ENCODE measurements at regions of chr2 and their contacts with region 1.

Region 1: DNA sequence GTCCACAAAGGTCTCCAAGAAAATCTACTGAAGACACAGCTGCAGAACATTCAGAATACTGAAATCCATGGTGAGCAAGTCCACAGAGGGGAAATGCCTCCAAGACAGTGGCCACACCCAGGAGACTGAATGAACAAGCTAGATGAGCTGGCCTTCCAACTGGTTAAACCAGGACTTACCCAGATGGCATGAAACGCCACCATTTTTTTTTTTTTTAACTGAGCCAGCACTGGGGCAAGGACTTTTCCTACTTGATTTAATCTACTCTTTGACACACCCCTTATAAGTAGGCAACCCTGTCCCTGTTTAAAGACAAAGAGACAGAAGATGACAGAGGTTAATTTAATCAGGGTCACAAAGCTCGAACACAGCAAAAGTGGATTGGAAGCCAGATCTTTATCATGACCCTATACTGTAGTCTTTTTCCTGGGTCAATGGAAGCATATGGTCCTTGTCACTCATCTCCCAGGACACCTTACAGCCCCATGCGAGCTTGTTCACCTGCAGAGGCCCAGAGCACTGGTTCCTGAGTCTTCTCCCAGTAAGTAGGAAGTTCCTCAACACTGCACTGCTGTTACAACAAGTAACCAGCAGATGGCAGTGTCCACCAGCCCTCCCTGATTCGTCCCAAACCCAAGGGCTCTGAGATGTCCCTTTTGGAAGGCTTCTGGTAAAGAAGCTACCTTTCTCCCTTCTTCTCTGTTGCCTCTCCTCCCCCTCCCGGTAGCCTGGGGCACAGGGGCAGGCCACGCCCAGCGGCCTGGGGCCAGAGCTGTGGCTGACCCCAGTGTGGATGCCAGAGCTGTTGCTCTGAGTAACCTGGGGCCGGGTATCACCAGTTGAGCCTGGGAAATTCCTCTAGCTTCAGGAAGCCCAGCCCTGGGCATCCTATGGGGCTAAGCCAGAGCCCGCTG is 5.6 kb upstream of the GDF7 start:
- DNase-seq: peak; percentile 74
- ATAC-seq: peak; percentile 79
- H3K4me3 ChIP-seq: no peak overlapping the region
- H3K27ac ChIP-seq: no peak overlapping the region
- H3K4me1 ChIP-seq: peaks cover 8% of the 10 kb centered on the region
- H3K27me3 ChIP-seq: peaks cover 41% of the 10 kb centered on the region
- CTCF ChIP-seq: peak; percentile 95

Region 2: GRCh38 chr2:20429528-20429927 is 231.8 kb before region 1 on chr2:
- CTCF ChIA-PET with region 1: no interaction called
- POLR2A ChIA-PET with region 1: no interaction called
- in situ Hi-C with region 1: no loop called
- intact Hi-C with region 1: no loop called
- DNase-seq: no peak
- ATAC-seq: no peak
- H3K4me3 ChIP-seq: no peak overlapping the region
- H3K27ac ChIP-seq: no peak overlapping the region
- H3K4me1 ChIP-seq: peaks cover 3% of the 10 kb centered on the region; the same call in 1 of the 2 replicates
- H3K27me3 ChIP-seq: no peaks in the 10 kb centered on the region
- CTCF ChIP-seq: no peak

Region 3: GRCh38 chr2:20682167-20682920 is 21.0 kb after region 1 on chr2:
- CTCF ChIA-PET with region 1: no interaction called
- POLR2A ChIA-PET with region 1: no interaction called
- in situ Hi-C with region 1: no loop called
- intact Hi-C with region 1: no loop called
- DNase-seq: no peak
- ATAC-seq: no peak
- H3K4me3 ChIP-seq: no peak overlapping the region
- H3K27ac ChIP-seq: no peak overlapping the region
- H3K4me1 ChIP-seq: no peaks in the 10 kb centered on the region
- H3K27me3 ChIP-seq: no peaks in the 10 kb centered on the region
- CTCF ChIP-seq: peak; percentile 72

Region 4: DNA sequence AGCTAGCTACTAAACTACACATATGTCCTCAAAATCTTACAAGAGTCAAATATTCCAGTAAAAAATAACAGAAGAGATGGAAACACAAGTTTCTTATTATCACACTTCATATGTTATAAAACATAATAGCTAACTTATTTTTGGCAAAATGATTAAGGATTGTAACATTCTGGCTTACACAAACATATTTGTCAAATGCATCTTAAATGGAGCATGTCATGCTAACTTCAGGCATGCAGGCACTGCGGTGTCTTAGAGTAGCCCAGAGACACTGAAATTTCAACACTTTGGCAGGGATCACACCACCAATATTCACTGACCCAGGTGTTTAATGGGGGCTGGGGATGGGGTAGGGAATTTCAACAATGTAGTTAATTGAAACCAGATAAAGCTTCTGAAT is 110.0 kb after region 1 on chr2:
- CTCF ChIA-PET with region 1: no interaction called
- POLR2A ChIA-PET with region 1: no interaction called
- in situ Hi-C with region 1: no loop called
- intact Hi-C with region 1: loop called (anchors 10 kb)
- DNase-seq: no peak
- ATAC-seq: no peak
- H3K4me3 ChIP-seq: no peak overlapping the region
- H3K27ac ChIP-seq: no peak overlapping the region
- H3K4me1 ChIP-seq: no peaks in the 10 kb centered on the region
- H3K27me3 ChIP-seq: no peaks in the 10 kb centered on the region
- CTCF ChIP-seq: no peak

Region 5: DNA sequence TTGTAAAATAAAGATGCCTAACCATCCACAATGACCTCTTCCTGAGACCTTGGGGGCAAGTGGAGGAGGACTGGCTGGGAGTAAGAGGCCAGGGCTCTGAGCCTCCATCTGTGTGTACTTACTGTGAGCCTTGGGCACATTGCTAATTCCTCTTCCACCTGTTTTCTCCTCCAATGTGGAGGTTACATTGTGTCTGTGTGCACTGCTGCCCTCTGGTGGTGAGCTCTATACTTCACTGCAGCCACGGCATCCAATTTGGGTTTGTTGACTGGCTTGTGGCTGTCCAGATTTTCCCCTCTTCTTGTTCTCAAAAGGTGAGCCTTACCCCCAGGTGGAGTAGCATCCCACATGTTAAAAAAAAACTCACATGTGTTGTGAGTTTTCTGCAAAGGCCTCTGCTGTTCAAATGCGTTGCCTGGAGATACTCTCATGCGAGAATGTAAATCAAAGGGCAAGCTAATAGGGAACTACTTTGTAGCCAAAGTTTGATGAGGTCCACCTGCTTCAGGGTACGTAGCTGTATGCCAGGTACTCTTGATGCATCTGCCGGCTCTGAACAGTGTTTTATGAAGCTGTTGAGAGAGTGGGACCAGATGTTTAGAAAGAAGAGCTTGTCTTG is 301.7 kb after region 1 on chr2:
- CTCF ChIA-PET with region 1: interaction called, 40 read pairs
- POLR2A ChIA-PET with region 1: no interaction called
- in situ Hi-C with region 1: no loop called
- intact Hi-C with region 1: loop called (anchors 1 kb)
- DNase-seq: peak; percentile 35
- ATAC-seq: peak; percentile 88
- H3K4me3 ChIP-seq: no peak overlapping the region
- H3K27ac ChIP-seq: no peak overlapping the region
- H3K4me1 ChIP-seq: no peaks in the 10 kb centered on the region
- H3K27me3 ChIP-seq: peaks cover 18% of the 10 kb centered on the region
- CTCF ChIP-seq: peak; percentile 90

Region 6: GRCh38 chr2:21025690-21026478 is 364.6 kb after region 1 on chr2:
- CTCF ChIA-PET with region 1: interaction called, 3 read pairs
- POLR2A ChIA-PET with region 1: no interaction called
- in situ Hi-C with region 1: no loop called
- intact Hi-C with region 1: loop called (anchors 5 kb)
- DNase-seq: no peak
- ATAC-seq: no peak
- H3K4me3 ChIP-seq: no peak overlapping the region
- H3K27ac ChIP-seq: no peak overlapping the region
- H3K4me1 ChIP-seq: no peaks in the 10 kb centered on the region
- H3K27me3 ChIP-seq: peaks cover 15% of the 10 kb centered on the region
- CTCF ChIP-seq: no peak

Region 7: DNA sequence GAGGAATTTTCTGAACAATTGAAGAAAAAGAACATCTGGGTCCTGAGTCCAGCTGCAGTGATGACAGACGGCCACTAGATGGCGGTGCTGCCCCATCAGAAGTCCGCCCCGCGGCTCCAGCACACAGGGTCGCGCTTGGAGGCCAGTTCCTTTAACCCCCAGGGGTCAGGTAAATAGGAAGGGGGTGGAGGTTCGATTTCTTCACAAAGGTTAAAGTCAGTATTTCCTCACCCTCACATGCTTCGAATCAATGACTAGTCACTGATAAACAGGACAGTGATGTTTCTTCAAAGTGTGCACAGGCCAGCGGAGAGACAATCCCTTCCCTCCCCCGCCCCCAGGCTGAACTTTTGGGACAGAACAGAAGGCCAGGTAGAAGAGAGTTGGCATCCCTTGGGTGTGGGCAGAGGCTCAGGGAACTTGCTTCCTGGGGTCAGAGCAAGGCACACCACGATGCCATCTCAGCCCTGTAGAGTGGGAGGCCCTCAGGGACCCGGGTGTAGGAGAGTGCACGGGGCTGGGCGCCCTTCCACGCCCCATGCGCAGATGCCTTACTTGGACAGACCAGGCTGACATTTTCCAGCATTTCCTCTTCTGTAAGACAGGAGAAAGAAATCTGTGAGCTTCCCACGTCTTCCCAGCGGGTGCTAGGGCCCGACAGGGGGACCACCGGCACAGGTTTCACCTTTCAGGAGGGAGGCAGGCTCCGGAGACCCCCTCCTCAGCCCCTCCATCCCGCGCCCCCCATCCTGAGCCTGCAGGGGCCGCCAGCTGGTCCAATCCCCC is 381.8 kb after region 1 on chr2:
- CTCF ChIA-PET with region 1: no interaction called
- POLR2A ChIA-PET with region 1: no interaction called
- in situ Hi-C with region 1: no loop called
- intact Hi-C with region 1: no loop called
- DNase-seq: peak; percentile 18
- ATAC-seq: peak; percentile 78
- H3K4me3 ChIP-seq: no peak overlapping the region
- H3K27ac ChIP-seq: no peak overlapping the region
- H3K4me1 ChIP-seq: no peaks in the 10 kb centered on the region
- H3K27me3 ChIP-seq: peaks cover 5% of the 10 kb centered on the region
- CTCF ChIP-seq: peak; percentile 97

Region 8: GRCh38 chr2:21118302-21118920 is 457.1 kb after region 1 on chr2:
- CTCF ChIA-PET with region 1: interaction called, 4 read pairs
- POLR2A ChIA-PET with region 1: no interaction called
- in situ Hi-C with region 1: no loop called
- intact Hi-C with region 1: loop called (anchors 2 kb)
- DNase-seq: peak; percentile 7
- ATAC-seq: peak; percentile 83; the same call in 1 of the 2 replicates
- H3K4me3 ChIP-seq: no peak overlapping the region
- H3K27ac ChIP-seq: no peak overlapping the region
- H3K4me1 ChIP-seq: no peaks in the 10 kb centered on the region
- H3K27me3 ChIP-seq: no peaks in the 10 kb centered on the region
- CTCF ChIP-seq: peak; percentile 54; the same call in 1 of the 2 replicates